AG04450 (cell line): ENCODE measurements at regions of chr19 and their contacts with region 1.

Region 1: DNA sequence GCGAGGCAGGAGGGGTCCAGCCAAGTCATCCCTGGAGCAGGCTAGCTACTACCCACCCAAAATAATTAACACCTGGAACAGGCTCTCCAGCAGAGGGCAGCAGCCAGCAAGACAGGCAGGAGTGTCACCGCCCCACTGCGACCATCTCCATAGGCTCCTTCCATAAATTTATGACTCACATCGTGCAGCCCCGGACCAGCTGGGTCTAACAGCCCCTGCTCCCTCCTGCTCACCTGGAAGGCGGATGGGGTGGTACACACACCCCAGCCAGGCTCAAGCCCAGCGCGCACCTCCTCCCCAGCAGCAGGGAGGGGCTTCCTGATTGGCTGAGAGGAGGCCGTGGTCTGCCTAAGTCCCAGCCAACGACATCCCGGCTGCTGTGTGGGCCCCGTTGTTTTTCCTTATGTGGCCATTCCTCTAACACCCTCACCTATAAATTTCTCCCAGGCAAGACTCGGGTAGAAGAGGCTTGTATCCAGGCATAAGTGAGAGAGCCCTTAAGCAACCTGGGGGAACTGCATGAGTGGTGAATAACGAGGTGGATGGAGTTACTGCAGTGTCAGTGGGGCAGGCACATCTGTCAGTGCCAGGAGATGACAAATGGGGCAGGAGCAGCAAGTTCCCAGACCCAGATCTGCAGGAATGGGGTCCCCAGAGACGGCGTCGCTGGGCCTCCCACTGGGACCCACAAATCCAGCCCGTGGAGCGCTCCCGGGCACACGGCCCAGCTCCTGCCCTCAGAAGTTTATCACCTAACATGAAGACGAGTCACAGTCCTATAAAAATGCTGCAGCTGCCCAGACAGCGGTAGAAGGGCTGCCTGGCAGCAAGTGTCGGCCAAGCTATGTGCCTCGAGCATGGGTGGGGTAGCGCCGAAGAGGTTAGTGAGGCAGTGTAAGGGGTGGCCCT is 43.1 kb downstream of the CEBPG start:
- DNase-seq: no peak
- H3K4me3 ChIP-seq: no peak overlapping the region
- H3K27ac ChIP-seq: no peak overlapping the region
- H3K27me3 ChIP-seq: no peaks in the 10 kb centered on the region
- CTCF ChIP-seq: peak; percentile 67

Region 2: DNA sequence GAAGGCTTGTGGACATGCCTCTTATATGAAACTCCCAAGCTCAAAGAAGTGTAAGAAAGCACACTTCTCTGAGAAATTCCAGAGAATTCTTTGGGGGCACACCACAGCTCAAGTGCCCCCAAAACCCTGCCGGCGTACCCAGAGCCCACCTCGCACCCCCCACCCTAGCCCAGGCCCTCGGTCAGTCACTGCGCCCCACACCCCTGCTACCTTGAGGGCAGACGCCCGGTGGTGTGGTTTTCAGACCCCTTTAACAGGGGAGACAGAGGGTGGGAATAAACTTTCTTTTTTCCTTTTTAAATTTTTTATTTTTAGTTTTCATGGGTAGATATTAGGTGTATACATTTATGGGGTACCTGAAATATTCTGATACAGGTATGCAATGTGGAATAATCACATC is 75.5 kb after region 1 on chr19:
- CTCF ChIA-PET with region 1: interaction called, 13 read pairs
- POLR2A ChIA-PET with region 1: no interaction called
- DNase-seq: no peak
- H3K4me3 ChIP-seq: no peak overlapping the region
- H3K27ac ChIP-seq: no peak overlapping the region
- H3K27me3 ChIP-seq: no peaks in the 10 kb centered on the region
- CTCF ChIP-seq: no peak

Region 3: GRCh38 chr19:33649627-33650305 is 233.2 kb after region 1 on chr19:
- CTCF ChIA-PET with region 1: no interaction called
- POLR2A ChIA-PET with region 1: no interaction called
- DNase-seq: no peak
- H3K4me3 ChIP-seq: no peak overlapping the region
- H3K27ac ChIP-seq: no peak overlapping the region
- H3K27me3 ChIP-seq: peaks cover 3% of the 10 kb centered on the region
- CTCF ChIP-seq: no peak

Region 4: GRCh38 chr19:33771384-33772101 is 355.0 kb after region 1 on chr19:
- CTCF ChIA-PET with region 1: interaction called, 15 read pairs
- POLR2A ChIA-PET with region 1: no interaction called
- DNase-seq: peak; percentile 18
- H3K4me3 ChIP-seq: no peak overlapping the region
- H3K27ac ChIP-seq: peak overlapping the region; percentile 2
- H3K27me3 ChIP-seq: peaks cover 9% of the 10 kb centered on the region
- CTCF ChIP-seq: peak; percentile 84